Posterior vena cava (tissue), 2 donors: ENCODE measurements at regions of chr16 and their contacts with region 1.

Region 1: DNA sequence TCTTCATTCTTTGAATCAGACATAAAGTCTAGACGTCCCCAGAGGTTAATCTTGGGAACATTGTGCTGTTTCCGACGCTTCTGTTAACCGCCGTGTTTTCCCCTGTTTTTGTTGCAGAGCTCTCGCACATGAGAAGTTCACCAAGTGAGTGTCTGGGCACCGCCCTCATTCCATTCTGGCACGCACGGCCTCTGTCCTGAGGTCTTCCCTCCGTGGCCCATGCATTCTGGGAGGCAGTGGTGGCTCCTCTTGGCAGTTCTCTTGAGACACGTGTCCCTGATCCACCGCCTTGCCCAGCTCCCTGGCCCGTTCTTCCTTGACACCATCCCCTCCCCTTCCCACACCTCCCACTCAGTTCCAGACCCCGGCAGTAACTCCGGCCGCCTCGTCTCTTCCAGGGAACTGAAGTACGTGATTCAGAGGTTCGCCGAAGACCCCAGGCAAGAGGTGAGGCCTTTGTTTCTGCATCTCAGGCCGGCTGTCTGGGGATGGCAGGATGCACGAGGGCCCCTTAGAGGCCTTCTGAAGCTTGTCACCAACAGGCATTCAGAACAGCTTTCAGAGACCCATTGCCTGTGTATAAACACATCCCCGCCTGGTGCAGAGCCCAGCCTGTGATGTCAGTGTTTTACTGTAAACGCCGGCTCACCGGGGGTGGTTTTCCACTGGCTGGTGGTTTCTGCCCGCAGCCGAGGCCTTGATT is 85.9 kb upstream of the PLCG2 start:
- DNase-seq: no peak

Region 2: GRCh38 chr16:81403616-81404373 is 289.4 kb before region 1 on chr16:
- intact Hi-C with region 1: loop called in 1 of 2 experiments (anchors 1 kb)
- DNase-seq: peak; percentile 96

Region 3: GRCh38 chr16:81654346-81654745 is 38.8 kb before region 1 on chr16:
- intact Hi-C with region 1: loop called in 1 of 2 experiments (anchors 1 kb)
- DNase-seq: no peak

Region 4: GRCh38 chr16:81680444-81681275 is 12.5 kb before region 1 on chr16:
- intact Hi-C with region 1: no loop called
- DNase-seq: no peak